ENCODE measurements at regions of chrX and their contacts with region 1.

Region 1: DNA sequence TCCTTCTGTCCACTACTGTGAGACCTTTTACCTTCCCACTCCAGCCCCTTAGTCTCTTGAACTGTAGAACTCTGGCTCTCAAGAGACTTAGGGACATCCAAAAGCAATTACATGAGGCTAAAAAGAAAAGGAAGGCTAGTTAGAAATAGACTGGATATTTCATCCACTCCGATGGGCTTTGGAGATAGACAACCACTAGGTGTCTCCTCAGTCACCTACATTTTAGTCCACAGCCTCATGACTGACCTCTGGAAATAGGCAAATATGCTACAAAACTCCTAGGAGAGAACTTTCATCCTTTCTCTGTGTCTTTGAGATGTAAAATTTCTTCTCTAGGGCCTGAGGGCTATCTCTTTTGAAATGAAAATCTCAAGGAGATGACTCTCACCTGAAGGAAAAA is 45.1 kb upstream of the LAMP2 start:
- DNase-seq: peak in 1 of 2 experiments; percentile 14
- H3K4me3 ChIP-seq: no peak overlapping the region
- H3K4me3 Mint-ChIP-seq: no peak overlapping the region
- H3K27ac Mint-ChIP-seq: no peak overlapping the region
- H3K4me1 ChIP-seq: peaks cover 28% of the 10 kb centered on the region
- H3K4me1 Mint-ChIP-seq: peaks cover 6% of the 10 kb centered on the region
- H3K27me3 ChIP-seq: no peaks in the 10 kb centered on the region
- H3K27me3 Mint-ChIP-seq: no peaks in the 10 kb centered on the region
- CTCF ChIP-seq: peak in 1 of 2 experiments; percentile 55

Region 2: DNA sequence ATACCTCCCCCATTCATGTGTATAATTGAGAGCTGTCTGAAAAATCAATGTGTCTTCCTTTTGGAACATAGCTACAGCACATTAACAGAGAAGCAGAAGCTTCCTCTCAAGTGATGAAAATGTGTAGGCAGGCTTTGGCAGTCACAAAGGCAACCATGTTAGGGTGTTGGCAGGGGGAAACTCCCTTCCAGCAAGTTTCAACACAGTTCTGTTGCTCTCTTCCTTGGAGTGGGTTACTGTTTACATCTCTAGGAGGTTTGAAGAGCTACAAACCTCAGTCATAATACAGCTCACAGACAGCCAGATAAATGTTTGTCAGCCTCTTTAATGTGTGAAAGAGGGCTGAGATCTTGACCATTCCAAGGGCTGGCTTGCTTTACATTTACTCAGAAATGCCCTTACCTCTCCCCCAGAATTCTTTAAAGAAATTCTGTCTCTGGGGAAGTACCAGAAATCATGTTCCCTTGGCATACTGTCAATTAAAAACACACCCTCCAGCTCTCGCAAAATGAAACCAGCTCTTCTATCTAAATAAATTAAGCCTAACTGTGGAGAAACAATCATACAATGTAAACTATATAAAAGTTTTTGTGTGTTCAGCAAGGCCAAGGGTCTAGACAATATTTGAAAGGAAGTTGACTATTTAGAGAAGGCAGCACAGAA is 244.7 kb before region 1 on chrX:
- CTCF ChIA-PET with region 1: no interaction called
- POLR2A ChIA-PET with region 1: no interaction called
- intact Hi-C with region 1: no loop called
- DNase-seq: no peak
- H3K4me3 ChIP-seq: no peak overlapping the region
- H3K4me3 Mint-ChIP-seq: no peak overlapping the region
- H3K27ac Mint-ChIP-seq: no peak overlapping the region
- H3K4me1 ChIP-seq: no peaks in the 10 kb centered on the region
- H3K4me1 Mint-ChIP-seq: no peaks in the 10 kb centered on the region
- H3K27me3 ChIP-seq: no peaks in the 10 kb centered on the region
- H3K27me3 Mint-ChIP-seq: no peaks in the 10 kb centered on the region
- CTCF ChIP-seq: no peak

Region 3: GRCh38 chrX:120560842-120561633 is 46.8 kb after region 1 on chrX and contains the start of gene CUL4B:
- CTCF ChIA-PET with region 1: no interaction called
- POLR2A ChIA-PET with region 1: no interaction called
- intact Hi-C with region 1: loop called (anchors 5 kb)
- DNase-seq: peak; percentile 91 to 95
- H3K4me3 ChIP-seq: peak within 1 kb of the TSS; percentile 72
- H3K4me3 Mint-ChIP-seq: peak within 1 kb of the TSS; percentile 95
- H3K27ac Mint-ChIP-seq: peak within 1 kb of the TSS; percentile 98
- H3K4me1 ChIP-seq: peaks cover 20% of the 10 kb centered on the region
- H3K4me1 Mint-ChIP-seq: peaks cover 8% of the 10 kb centered on the region
- H3K27me3 ChIP-seq: no peaks in the 10 kb centered on the region
- H3K27me3 Mint-ChIP-seq: no peaks in the 10 kb centered on the region
- CTCF ChIP-seq: no peak
- total RNA-seq, gene CUL4B: 41.0 and 47.7 TPM in 2 replicates

Region 4: DNA sequence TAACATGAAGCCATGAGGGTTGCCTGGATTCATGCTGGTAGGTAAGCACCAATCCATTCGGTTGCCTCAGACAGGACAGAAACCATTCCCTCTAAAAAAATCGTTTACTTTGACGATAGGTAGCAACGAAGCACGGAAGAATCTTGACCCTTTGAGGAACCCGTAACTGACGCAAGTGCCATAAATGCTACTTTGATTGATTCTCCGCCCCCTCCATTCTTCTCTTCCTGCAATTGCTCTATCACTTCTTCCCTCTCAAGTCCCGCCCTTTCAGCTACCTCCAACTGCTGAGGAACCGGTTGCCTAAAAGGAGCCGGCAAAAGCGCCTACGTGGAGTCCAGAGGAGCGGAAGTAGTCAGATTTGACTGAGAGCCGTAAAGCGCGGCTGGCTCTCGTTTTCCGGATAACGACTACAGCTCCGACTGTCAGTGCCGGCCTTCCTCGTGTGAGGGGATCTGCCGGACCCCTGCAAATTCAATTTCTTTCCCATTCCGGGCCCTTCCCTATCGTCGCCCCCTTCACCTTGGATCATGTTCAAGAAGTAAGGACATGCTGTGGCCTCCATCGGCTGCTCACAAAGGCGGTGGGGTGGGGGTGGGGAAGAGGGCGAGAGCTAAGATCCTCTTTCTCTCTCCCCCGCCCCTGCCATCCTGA is 89.6 kb after region 1 on chrX and contains the start of gene MCTS1:
- CTCF ChIA-PET with region 1: no interaction called
- POLR2A ChIA-PET with region 1: no interaction called
- intact Hi-C with region 1: loop called (anchors 5 kb)
- DNase-seq: peak; percentile 88 to 95
- H3K4me3 ChIP-seq: peak within 1 kb of the TSS; percentile 67
- H3K4me3 Mint-ChIP-seq: peak within 1 kb of the TSS; percentile 99
- H3K27ac Mint-ChIP-seq: peak within 1 kb of the TSS; percentile 98
- H3K4me1 ChIP-seq: no peaks in the 10 kb centered on the region
- H3K4me1 Mint-ChIP-seq: no peaks in the 10 kb centered on the region
- H3K27me3 ChIP-seq: no peaks in the 10 kb centered on the region
- H3K27me3 Mint-ChIP-seq: no peaks in the 10 kb centered on the region
- CTCF ChIP-seq: no peak
- total RNA-seq, gene MCTS1: 50.5 and 55.8 TPM in 2 replicates

Region 5: DNA sequence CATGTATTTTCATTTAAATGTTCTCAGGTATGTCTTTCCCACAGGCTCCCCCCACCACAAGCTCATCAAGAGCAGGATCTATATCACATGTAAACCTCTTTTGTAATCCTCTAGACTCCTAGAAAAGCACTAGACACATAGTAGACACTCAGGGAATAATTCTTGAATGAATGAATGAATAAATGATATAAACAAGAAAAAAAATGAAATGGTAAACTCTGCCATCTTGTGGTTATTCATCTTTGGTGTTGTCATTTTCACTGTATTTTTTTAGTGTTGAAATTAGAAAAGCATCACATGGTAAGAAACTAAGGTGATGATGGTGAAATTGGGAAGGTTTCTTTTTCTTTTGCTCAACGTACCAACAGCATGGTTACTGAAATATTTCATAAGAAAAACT is 149.8 kb after region 1 on chrX:
- CTCF ChIA-PET with region 1: no interaction called
- POLR2A ChIA-PET with region 1: no interaction called
- intact Hi-C with region 1: loop called (anchors 1 kb)
- DNase-seq: no peak
- H3K4me3 ChIP-seq: no peak overlapping the region
- H3K4me3 Mint-ChIP-seq: no peak overlapping the region
- H3K27ac Mint-ChIP-seq: no peak overlapping the region
- H3K4me1 ChIP-seq: no peaks in the 10 kb centered on the region
- H3K4me1 Mint-ChIP-seq: no peaks in the 10 kb centered on the region
- H3K27me3 ChIP-seq: no peaks in the 10 kb centered on the region
- H3K27me3 Mint-ChIP-seq: no peaks in the 10 kb centered on the region
- CTCF ChIP-seq: peak in 1 of 2 experiments; percentile 24

Region 6: GRCh38 chrX:120769576-120770341 is 255.5 kb after region 1 on chrX:
- CTCF ChIA-PET with region 1: no interaction called
- POLR2A ChIA-PET with region 1: no interaction called
- intact Hi-C with region 1: loop called (anchors 5 kb)
- DNase-seq: no peak
- H3K4me3 ChIP-seq: no peak overlapping the region
- H3K4me3 Mint-ChIP-seq: no peak overlapping the region
- H3K27ac Mint-ChIP-seq: no peak overlapping the region
- H3K4me1 ChIP-seq: no peaks in the 10 kb centered on the region
- H3K4me1 Mint-ChIP-seq: no peaks in the 10 kb centered on the region
- H3K27me3 ChIP-seq: no peaks in the 10 kb centered on the region
- H3K27me3 Mint-ChIP-seq: no peaks in the 10 kb centered on the region
- CTCF ChIP-seq: no peak